ENCODE measurements at regions of chr20 and their contacts with region 1.

Region 1: DNA sequence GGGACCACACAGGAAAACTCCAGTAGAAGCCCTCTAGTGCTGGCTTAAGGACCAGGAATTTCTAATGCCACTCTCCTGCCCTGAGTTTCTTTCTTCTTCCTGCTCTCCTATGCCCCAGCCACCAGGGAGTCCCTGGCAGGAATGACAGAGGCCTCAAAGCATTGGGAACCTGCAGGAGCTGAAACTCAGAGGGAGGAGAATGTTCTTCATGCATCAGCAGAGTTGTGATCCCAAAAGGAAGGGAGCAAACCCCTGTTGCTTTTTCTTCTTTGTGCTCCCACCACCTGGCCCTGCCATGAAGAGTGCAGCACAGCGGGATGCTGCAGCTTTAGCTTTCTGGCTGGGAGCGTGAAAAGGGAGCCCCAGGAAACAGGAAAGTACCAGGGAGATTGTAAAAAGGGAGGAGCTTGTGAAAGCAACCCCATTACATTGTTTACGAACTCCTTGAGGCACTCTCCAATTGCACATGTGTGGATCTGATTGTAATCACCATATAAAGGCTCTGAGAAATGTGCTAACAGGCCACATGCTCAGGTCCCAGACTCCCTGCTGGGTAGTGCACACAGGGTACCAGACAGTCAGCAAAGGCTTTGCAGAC is 34.7 kb upstream of the FKBP1A start:
- DNase-seq: no peak
- H3K4me3 ChIP-seq: no peak overlapping the region
- H3K27me3 ChIP-seq: no peaks in the 10 kb centered on the region
- CTCF ChIP-seq: 0 out of 2 replicates have a peak, but pooled peaks have one; percentile 4

Region 2: GRCh38 chr20:1313236-1313964 is 114.2 kb before region 1 on chr20:
- CTCF ChIA-PET with region 1: interaction called, 10 read pairs
- POLR2A ChIA-PET with region 1: no interaction called
- DNase-seq: no peak
- H3K4me3 ChIP-seq: peak overlapping the region; percentile 21
- H3K27me3 ChIP-seq: no peaks in the 10 kb centered on the region
- CTCF ChIP-seq: peak; percentile 97

Region 3: GRCh38 chr20:1325173-1326030 is 102.2 kb before region 1 on chr20:
- CTCF ChIA-PET with region 1: interaction called, 10 read pairs
- POLR2A ChIA-PET with region 1: no interaction called
- DNase-seq: peak; percentile 81
- H3K4me3 ChIP-seq: peak overlapping the region; percentile 79
- H3K27me3 ChIP-seq: no peaks in the 10 kb centered on the region
- CTCF ChIP-seq: 0 out of 2 replicates have a peak, but pooled peaks have one; percentile 12

Region 4: GRCh38 chr20:2236256-2236655 is 808.7 kb after region 1 on chr20:
- CTCF ChIA-PET with region 1: no interaction called
- POLR2A ChIA-PET with region 1: interaction called, 17 read pairs
- DNase-seq: no peak
- H3K4me3 ChIP-seq: no peak overlapping the region
- H3K27me3 ChIP-seq: no peaks in the 10 kb centered on the region
- CTCF ChIP-seq: no peak

Measured in BJ (cell line).